Naive thymus-derived CD4-positive, alpha-beta T cell (primary cell): ENCODE measurements at regions of chr10 and their contacts with region 1.

Region 1: DNA sequence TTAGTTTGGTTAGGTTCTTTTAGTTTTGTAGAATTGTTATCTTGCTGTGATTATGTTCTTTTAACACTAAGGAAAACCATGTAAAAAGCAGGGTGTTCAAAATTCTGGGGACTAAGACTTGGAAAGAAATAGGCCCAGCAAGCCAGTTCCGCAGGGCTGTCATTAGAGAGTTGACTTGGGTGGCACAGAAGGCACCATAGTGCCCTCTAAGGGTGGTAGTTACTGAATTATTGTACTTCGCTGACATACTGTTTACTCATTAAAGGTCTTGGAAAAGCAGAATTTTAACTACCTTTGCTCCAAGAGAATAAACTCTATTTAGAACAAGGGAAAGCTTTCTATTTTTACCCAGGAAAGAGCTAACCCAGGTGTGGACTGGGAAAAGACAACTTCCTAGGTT is 86.5 kb downstream of the OTUD1 start:
- DNase-seq: peak in 1 of 9 donors; percentile 15
- ATAC-seq: peak; percentile 50
- H3K4me3 ChIP-seq: no peak overlapping the region
- H3K4me3 Mint-ChIP-seq: no peak overlapping the region
- H3K27ac ChIP-seq: no peak overlapping the region
- H3K27ac Mint-ChIP-seq: peak overlapping the region in 1 of 9 donors; percentile 72
- H3K4me1 ChIP-seq: no peaks in the 10 kb centered on the region
- H3K4me1 Mint-ChIP-seq: peaks cover 0 to 5% (median 0%) of the 10 kb centered on the region in 7 donors
- H3K27me3 ChIP-seq: no peaks in the 10 kb centered on the region
- H3K27me3 Mint-ChIP-seq: peaks cover 0 to 7% (median 6%) of the 10 kb centered on the region in 5 donors

Region 2: GRCh38 chr10:23325132-23325531 is 200.3 kb before region 1 on chr10:
- CTCF ChIA-PET with region 1: no interaction called
- POLR2A ChIA-PET with region 1: no interaction called
- intact Hi-C with region 1: loop called in 1 of 2 experiments (anchors 1 kb)
- DNase-seq: no peak
- ATAC-seq: peak; percentile 24
- H3K4me3 ChIP-seq: no peak overlapping the region
- H3K4me3 Mint-ChIP-seq: no peak overlapping the region
- H3K27ac ChIP-seq: no peak overlapping the region
- H3K27ac Mint-ChIP-seq: no peak overlapping the region
- H3K4me1 ChIP-seq: no peaks in the 10 kb centered on the region
- H3K4me1 Mint-ChIP-seq: peaks cover 0 to 3% (median 0%) of the 10 kb centered on the region in 7 donors
- H3K27me3 ChIP-seq: no peaks in the 10 kb centered on the region
- H3K27me3 Mint-ChIP-seq: peaks cover 0 to 16% (median 4%) of the 10 kb centered on the region in 5 donors

Region 3: GRCh38 chr10:23540401-23541030 is 15.1 kb after region 1 on chr10:
- CTCF ChIA-PET with region 1: interaction called, 20 read pairs
- POLR2A ChIA-PET with region 1: no interaction called
- intact Hi-C with region 1: loop called in 1 of 2 experiments (anchors 1 kb)
- DNase-seq: peak in 7 of 9 donors; percentile 11 to 56 (median 47)
- ATAC-seq: peak; percentile 41
- H3K4me3 ChIP-seq: no peak overlapping the region
- H3K4me3 Mint-ChIP-seq: peak overlapping the region; percentile 37 to 77 (median 74)
- H3K27ac ChIP-seq: peak overlapping the region; percentile 66
- H3K27ac Mint-ChIP-seq: peak overlapping the region; percentile 43 to 95 (median 87)
- H3K4me1 ChIP-seq: peaks cover 0 to 47% of the 10 kb centered on the region in 2 donors
- H3K4me1 Mint-ChIP-seq: peaks cover 31 to 76% (median 59%) of the 10 kb centered on the region in 7 donors
- H3K27me3 ChIP-seq: no peaks in the 10 kb centered on the region
- H3K27me3 Mint-ChIP-seq: no peaks in the 10 kb centered on the region

Region 4: DNA sequence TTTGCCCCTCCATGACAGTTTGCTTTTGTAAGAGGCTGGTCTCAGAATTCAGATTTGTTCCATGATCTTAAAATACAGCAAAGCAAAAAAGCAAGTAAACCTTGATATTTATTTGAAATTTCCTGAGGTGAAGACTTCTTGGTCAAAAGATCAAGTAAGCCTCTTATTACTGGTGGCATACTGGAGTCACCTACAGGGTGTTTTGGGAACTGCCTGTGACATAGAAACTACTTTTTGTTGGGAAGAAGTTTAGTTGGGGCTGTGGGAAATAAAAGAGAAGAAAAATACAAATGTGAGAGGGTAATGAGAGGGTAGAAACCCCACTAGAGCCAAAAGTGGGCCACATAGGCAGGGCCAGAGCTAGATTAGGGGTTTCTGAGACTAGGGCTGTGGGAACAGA is 131.3 kb after region 1 on chr10:
- CTCF ChIA-PET with region 1: interaction called, 3 read pairs
- POLR2A ChIA-PET with region 1: no interaction called
- intact Hi-C with region 1: loop called in 1 of 2 experiments (anchors 2 kb)
- DNase-seq: peak in 5 of 9 donors; percentile 4 to 40 (median 37)
- ATAC-seq: no peak
- H3K4me3 ChIP-seq: no peak overlapping the region
- H3K4me3 Mint-ChIP-seq: no peak overlapping the region
- H3K27ac ChIP-seq: no peak overlapping the region
- H3K27ac Mint-ChIP-seq: peak overlapping the region in 1 of 9 donors; percentile 16
- H3K4me1 ChIP-seq: no peaks in the 10 kb centered on the region
- H3K4me1 Mint-ChIP-seq: peaks cover 0 to 2% (median 0%) of the 10 kb centered on the region in 7 donors
- H3K27me3 ChIP-seq: no peaks in the 10 kb centered on the region
- H3K27me3 Mint-ChIP-seq: peaks cover 0 to 14% (median 9%) of the 10 kb centered on the region in 5 donors